ENCODE measurements at regions of chr17 and their contacts with region 1.

Region 1: GRCh38 chr17:933312-934083 is 46.1 kb downstream of the NXN start:
- DNase-seq: peak; percentile 89 to 97
- ATAC-seq: peak; percentile 93
- H3K4me3 ChIP-seq: no peak overlapping the region
- H3K27ac ChIP-seq: peak overlapping the region; percentile 74 to 84
- H3K4me1 ChIP-seq: peaks cover 69% of the 10 kb centered on the region
- CTCF ChIP-seq: no peak
- EP300 ChIP-seq: peak; percentile 85 to 96
- POLR2A ChIP-seq: no peak
- RAD21 ChIP-seq: peak in 1 of 2 experiments; percentile 46; a peak in 1 of 5 replicates

Region 2: GRCh38 chr17:794876-795275 is 138.6 kb before region 1 on chr17:
- CTCF ChIA-PET with region 1: interaction called, 11 read pairs
- POLR2A ChIA-PET with region 1: no interaction called
- DNase-seq: peak; percentile 79 to 87
- ATAC-seq: peak; percentile 65 to 80
- H3K4me3 ChIP-seq: no peak overlapping the region
- H3K27ac ChIP-seq: peak overlapping the region in 1 of 2 experiments; percentile 17; a peak in 2 of 6 replicates
- H3K4me1 ChIP-seq: peaks cover 7% of the 10 kb centered on the region
- CTCF ChIP-seq: peak; percentile 92
- EP300 ChIP-seq: no peak
- POLR2A ChIP-seq: no peak
- RAD21 ChIP-seq: peak; percentile 97 to 98

Region 3: GRCh38 chr17:951325-952132 is 18.0 kb after region 1 on chr17:
- CTCF ChIA-PET with region 1: interaction called, 18 read pairs
- POLR2A ChIA-PET with region 1: interaction called, 7 read pairs
- DNase-seq: peak; percentile 84 to 90
- ATAC-seq: peak; percentile 86 to 93
- H3K4me3 ChIP-seq: peak overlapping the region; percentile 29
- H3K27ac ChIP-seq: peak overlapping the region; percentile 80 to 90
- H3K4me1 ChIP-seq: peaks cover 43% of the 10 kb centered on the region
- CTCF ChIP-seq: no peak
- EP300 ChIP-seq: peak in 1 of 2 experiments; percentile 47; a peak in 1 of 5 replicates
- POLR2A ChIP-seq: no peak
- RAD21 ChIP-seq: no peak; a peak in 1 of 5 replicates